ENCODE measurements at regions of chr3 and their contacts with region 1.

Region 1: GRCh38 chr3:138915503-138916498 is 31.1 kb downstream of the FOXL2 start:
- ATAC-seq: peak; percentile 89 to 97 (median 94)
- H3K4me3 ChIP-seq: peak overlapping the region; percentile 42 to 65 (median 45)
- H3K27ac ChIP-seq: peak overlapping the region in 1 of 2 donors; percentile 43
- H3K4me1 ChIP-seq: no peaks in the 10 kb centered on the region

Region 2: DNA sequence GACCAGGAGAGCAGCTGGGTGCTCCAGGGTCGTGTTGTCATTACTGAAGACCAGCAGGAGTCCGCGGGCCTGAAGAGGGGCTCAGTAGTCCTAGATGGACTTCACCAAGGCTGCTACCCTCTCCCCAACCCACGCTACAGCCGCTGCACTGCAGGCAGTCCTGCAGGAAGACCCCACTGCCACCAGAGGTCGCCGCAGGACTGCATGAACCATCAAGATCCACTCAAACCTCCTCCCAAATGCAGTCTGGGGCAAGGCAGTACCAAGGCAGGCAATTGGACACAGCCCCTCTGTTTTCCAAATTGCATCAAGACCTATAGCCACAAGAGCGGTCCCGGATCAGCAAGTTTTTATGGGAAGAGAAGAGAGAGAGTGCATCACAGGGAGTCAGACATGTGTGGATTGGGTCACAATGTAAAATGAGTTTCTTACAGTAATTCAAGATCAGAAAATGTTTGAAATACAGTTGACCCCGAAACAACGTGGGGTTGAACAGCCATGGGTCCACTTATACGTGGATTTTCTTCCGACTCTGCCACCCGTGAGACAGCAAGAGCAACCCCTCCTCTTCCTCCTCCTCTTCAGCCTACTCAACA is 847.1 kb before region 1 on chr3:
- in situ Hi-C with region 1: loop called in 1 of 9 experiments (anchors 25 kb)
- ATAC-seq: peak; percentile 88 to 99 (median 90)
- H3K4me3 ChIP-seq: no peak overlapping the region
- H3K27ac ChIP-seq: no peak overlapping the region
- H3K4me1 ChIP-seq: no peaks in the 10 kb centered on the region

Region 3: DNA sequence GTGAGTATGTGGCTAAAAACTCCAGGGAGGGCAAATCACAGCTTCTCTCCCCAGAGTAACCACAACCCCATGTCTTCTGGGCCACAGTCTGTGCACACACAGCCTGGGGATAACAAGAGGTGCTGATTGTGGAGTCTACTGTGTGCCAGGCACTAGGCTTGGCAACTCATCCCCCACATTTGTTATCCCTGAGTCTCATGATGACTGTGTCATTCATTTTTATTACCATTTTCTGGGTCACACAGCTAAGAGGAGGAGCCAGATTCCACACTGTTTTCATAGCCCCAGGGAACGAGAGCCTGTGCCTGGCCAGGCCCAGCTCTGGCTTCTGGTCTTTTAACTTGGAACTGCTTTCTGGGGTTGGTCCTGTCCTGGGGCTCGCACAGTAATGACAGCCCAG is 446.9 kb before region 1 on chr3:
- in situ Hi-C with region 1: loop called in 1 of 9 experiments (anchors 25 kb)
- ATAC-seq: peak in 3 of 8 experiments; percentile 69 to 89 (median 82)
- H3K4me3 ChIP-seq: no peak overlapping the region
- H3K27ac ChIP-seq: no peak overlapping the region
- H3K4me1 ChIP-seq: peaks cover 0 to 5% of the 10 kb centered on the region in 2 donors

Region 4: GRCh38 chr3:138608322-138609135 is 307.3 kb before region 1 on chr3 and contains the start of gene FAIM:
- in situ Hi-C with region 1: loop called in 2 of 9 experiments (anchors 25 kb)
- ATAC-seq: peak; percentile 81 to 91 (median 88)
- H3K4me3 ChIP-seq: peak within 1 kb of the TSS; percentile 45 to 83 (median 61)
- H3K27ac ChIP-seq: peak within 1 kb of the TSS; percentile 90 to 94
- H3K4me1 ChIP-seq: peaks cover 5 to 10% of the 10 kb centered on the region in 2 donors
- total RNA-seq, gene FAIM: 7.3 to 25.3 (median 12.7) TPM

Region 5: GRCh38 chr3:138717348-138717747 is 198.5 kb before region 1 on chr3:
- in situ Hi-C with region 1: loop called in 1 of 9 experiments (anchors 25 kb)
- ATAC-seq: no peak
- H3K4me3 ChIP-seq: no peak overlapping the region
- H3K27ac ChIP-seq: no peak overlapping the region
- H3K4me1 ChIP-seq: no peaks in the 10 kb centered on the region